SK-N-SH (cell line): ENCODE measurements at regions of chr20 and their contacts with region 1.

Region 1: GRCh38 chr20:38057351-38057972 is 23.9 kb downstream of the RPRD1B start:
- DNase-seq: peak; percentile 80
- H3K4me3 ChIP-seq: no peak overlapping the region; a peak in 1 of 4 replicates
- H3K27ac ChIP-seq: peak overlapping the region in 1 of 2 experiments; percentile 22; a peak in 2 of 4 replicates
- H3K4me1 ChIP-seq: no peaks in the 10 kb centered on the region; a peak in 1 of 4 replicates
- H3K27me3 ChIP-seq: no peaks in the 10 kb centered on the region
- CTCF ChIP-seq: peak; percentile 95
- EP300 ChIP-seq: no peak
- RAD21 ChIP-seq: peak; percentile 94

Region 2: GRCh38 chr20:37864298-37864697 is 193.2 kb before region 1 on chr20:
- CTCF ChIA-PET with region 1: no interaction called
- POLR2A ChIA-PET with region 1: no interaction called
- DNase-seq: no peak
- H3K4me3 ChIP-seq: no peak overlapping the region
- H3K27ac ChIP-seq: no peak overlapping the region
- H3K4me1 ChIP-seq: peaks cover 0 to 11% of the 10 kb centered on the region in 2 experiments; a peak in 2 of 4 replicates
- H3K27me3 ChIP-seq: no peaks in the 10 kb centered on the region
- CTCF ChIP-seq: no peak
- EP300 ChIP-seq: no peak
- RAD21 ChIP-seq: no peak

Region 3: GRCh38 chr20:37901654-37902503 is 155.6 kb before region 1 on chr20:
- CTCF ChIA-PET with region 1: interaction called, 10 read pairs
- POLR2A ChIA-PET with region 1: no interaction called
- DNase-seq: peak; percentile 86
- H3K4me3 ChIP-seq: peak overlapping the region; percentile 57 to 60
- H3K27ac ChIP-seq: no peak overlapping the region
- H3K4me1 ChIP-seq: peaks cover 12 to 25% of the 10 kb centered on the region in 2 experiments; a peak in 2 of 4 replicates
- H3K27me3 ChIP-seq: no peaks in the 10 kb centered on the region
- CTCF ChIP-seq: peak; percentile 63
- EP300 ChIP-seq: no peak
- RAD21 ChIP-seq: peak; percentile 83

Region 4: DNA sequence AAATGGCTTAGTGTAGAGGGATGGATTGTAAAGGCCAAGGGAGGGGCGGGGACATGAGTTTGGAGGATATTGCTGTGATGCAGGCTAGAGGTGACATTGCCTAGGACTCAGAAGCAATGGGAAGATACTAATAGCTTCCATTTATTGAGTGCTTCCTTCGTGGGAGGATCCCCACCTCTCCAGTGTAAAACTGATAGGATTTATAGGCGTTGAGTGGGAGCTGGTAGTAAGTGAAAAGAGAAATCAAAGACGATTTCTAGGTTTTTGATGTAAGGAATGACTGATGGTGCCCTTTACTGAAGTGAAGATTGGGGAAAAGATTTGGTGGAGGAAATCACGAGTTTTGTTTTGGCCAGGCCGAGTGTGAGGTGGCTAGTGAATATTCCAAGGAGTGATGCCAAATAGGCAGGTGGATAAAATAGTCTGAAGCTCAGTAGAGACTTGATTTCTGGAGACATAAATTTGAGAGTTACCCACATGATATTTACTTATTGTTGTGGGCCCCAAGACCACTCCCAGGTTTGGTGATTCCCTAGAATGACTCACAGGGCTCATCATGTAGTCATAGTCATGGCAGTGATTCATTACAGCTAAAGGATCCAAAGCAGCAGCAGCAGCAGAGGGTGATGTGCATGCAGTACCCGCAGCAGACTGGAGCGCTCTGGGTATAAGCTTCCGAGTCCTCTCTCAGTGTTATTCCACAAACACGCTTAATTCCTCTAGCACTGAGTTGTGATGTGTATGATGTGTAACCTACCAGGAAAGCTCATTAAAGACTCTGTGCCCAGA is 13.8 kb before region 1 on chr20:
- CTCF ChIA-PET with region 1: interaction called, 23 read pairs
- POLR2A ChIA-PET with region 1: no interaction called
- DNase-seq: no peak
- H3K4me3 ChIP-seq: no peak overlapping the region
- H3K27ac ChIP-seq: peak overlapping the region in 1 of 2 experiments; percentile 69; a peak in 2 of 4 replicates
- H3K4me1 ChIP-seq: peaks cover 0 to 10% of the 10 kb centered on the region in 2 experiments; a peak in 3 of 4 replicates
- H3K27me3 ChIP-seq: no peaks in the 10 kb centered on the region
- CTCF ChIP-seq: peak; percentile 28; the same call in 1 of the 2 replicates
- EP300 ChIP-seq: no peak
- RAD21 ChIP-seq: no peak

Region 5: DNA sequence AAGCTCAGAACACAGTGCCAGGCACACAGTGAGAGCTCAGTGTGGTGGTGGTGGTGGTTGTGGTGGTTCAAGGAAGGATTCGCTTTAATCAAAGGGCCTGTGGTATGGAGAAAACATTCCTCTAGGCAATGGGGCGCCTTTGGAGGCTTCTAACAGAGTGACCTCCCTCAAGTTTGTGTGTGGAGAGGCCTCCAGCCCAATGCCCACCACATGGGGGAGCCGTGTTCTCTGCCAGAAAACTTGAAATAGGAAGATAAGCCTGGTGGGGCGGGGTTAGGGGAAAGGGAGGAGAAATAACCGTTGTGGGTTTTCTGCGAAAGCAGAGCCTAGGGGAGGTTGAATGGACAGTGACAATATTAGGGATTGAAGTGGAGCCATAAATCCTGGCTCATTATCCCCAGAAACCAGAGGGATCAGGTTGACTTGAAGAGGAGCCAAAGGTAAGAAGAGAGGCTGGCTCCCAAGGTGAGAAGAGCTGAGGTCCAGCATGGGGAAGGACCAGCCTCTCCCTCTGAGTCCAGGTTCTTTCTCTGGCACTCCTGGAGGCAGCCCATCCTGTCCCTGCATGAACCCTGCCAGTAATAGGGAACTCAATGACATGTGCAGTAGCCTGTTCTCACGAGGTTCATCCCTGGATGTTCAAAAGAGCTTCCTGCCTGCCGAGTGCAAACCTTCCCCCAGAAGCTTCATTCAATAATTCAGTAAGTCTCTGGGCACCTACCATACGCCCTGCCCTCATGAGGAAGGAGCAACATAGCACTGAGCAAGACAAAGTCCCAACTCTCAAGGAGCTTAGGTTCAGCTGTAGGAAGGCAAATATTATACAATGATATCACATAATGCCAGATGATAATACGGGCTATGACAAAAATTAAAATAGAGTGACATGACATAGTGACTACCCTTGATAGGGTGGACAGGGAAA is 56.2 kb after region 1 on chr20:
- CTCF ChIA-PET with region 1: interaction called, 11 read pairs
- POLR2A ChIA-PET with region 1: no interaction called
- DNase-seq: no peak
- H3K4me3 ChIP-seq: no peak overlapping the region
- H3K27ac ChIP-seq: peak overlapping the region; percentile 58 to 65
- H3K4me1 ChIP-seq: peaks cover 38 to 42% of the 10 kb centered on the region in 2 experiments
- H3K27me3 ChIP-seq: no peaks in the 10 kb centered on the region
- CTCF ChIP-seq: peak; percentile 57
- EP300 ChIP-seq: no peak
- RAD21 ChIP-seq: peak; percentile 66

Region 6: GRCh38 chr20:38152621-38153231 is 95.3 kb after region 1 on chr20:
- CTCF ChIA-PET with region 1: interaction called, 13 read pairs
- POLR2A ChIA-PET with region 1: no interaction called
- DNase-seq: peak; percentile 91
- H3K4me3 ChIP-seq: no peak overlapping the region
- H3K27ac ChIP-seq: peak overlapping the region; percentile 86 to 98
- H3K4me1 ChIP-seq: peaks cover 30 to 33% of the 10 kb centered on the region in 2 experiments
- H3K27me3 ChIP-seq: no peaks in the 10 kb centered on the region
- CTCF ChIP-seq: no peak
- EP300 ChIP-seq: peak; percentile 40 to 47; a peak in 2 of 4 replicates
- RAD21 ChIP-seq: no peak

Region 7: DNA sequence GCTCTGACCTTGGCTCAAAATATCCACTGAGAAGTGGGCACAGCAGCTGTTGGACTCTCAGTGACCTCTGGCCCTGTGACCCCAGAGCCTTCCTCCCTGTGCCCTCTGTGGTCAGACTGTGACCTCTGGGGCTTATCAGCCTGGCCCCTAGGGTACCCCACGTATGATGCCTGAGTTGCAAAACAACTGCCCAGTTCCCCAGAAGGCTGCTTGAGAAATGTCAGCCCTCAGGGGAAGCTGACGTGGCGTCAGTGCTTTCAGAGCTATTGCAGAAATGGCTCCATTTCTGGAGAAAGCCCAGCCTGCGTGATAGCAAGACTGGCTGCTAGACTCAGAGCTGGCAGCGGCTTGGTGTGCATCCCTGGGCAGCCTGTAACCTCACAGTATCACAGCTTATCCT is 139.1 kb after region 1 on chr20:
- CTCF ChIA-PET with region 1: interaction called, 12 read pairs
- POLR2A ChIA-PET with region 1: no interaction called
- DNase-seq: no peak
- H3K4me3 ChIP-seq: no peak overlapping the region
- H3K27ac ChIP-seq: no peak overlapping the region
- H3K4me1 ChIP-seq: peaks cover 0 to 6% of the 10 kb centered on the region in 2 experiments; a peak in 1 of 4 replicates
- H3K27me3 ChIP-seq: no peaks in the 10 kb centered on the region
- CTCF ChIP-seq: no peak
- EP300 ChIP-seq: no peak
- RAD21 ChIP-seq: no peak

Region 8: GRCh38 chr20:38321959-38322598 is 264.6 kb after region 1 on chr20:
- CTCF ChIA-PET with region 1: interaction called, 10 read pairs
- POLR2A ChIA-PET with region 1: no interaction called
- DNase-seq: peak; percentile 73
- H3K4me3 ChIP-seq: no peak overlapping the region; a peak in 1 of 4 replicates
- H3K27ac ChIP-seq: no peak overlapping the region
- H3K4me1 ChIP-seq: no peaks in the 10 kb centered on the region
- H3K27me3 ChIP-seq: no peaks in the 10 kb centered on the region
- CTCF ChIP-seq: peak; percentile 84
- EP300 ChIP-seq: no peak
- RAD21 ChIP-seq: peak; percentile 87

Region 9: GRCh38 chr20:38418509-38419204 is 361.2 kb after region 1 on chr20:
- CTCF ChIA-PET with region 1: no interaction called
- POLR2A ChIA-PET with region 1: no interaction called
- DNase-seq: no peak
- H3K4me3 ChIP-seq: no peak overlapping the region
- H3K27ac ChIP-seq: peak overlapping the region in 1 of 2 experiments; percentile 12; a peak in 2 of 4 replicates
- H3K4me1 ChIP-seq: peaks cover 0 to 6% of the 10 kb centered on the region in 2 experiments; a peak in 1 of 4 replicates
- H3K27me3 ChIP-seq: no peaks in the 10 kb centered on the region
- CTCF ChIP-seq: no peak
- EP300 ChIP-seq: no peak
- RAD21 ChIP-seq: no peak

Region 10: GRCh38 chr20:38947931-38948362 is 890.5 kb after region 1 on chr20:
- CTCF ChIA-PET with region 1: no interaction called
- POLR2A ChIA-PET with region 1: no interaction called
- DNase-seq: no peak
- H3K4me3 ChIP-seq: no peak overlapping the region
- H3K27ac ChIP-seq: no peak overlapping the region
- H3K4me1 ChIP-seq: no peaks in the 10 kb centered on the region
- H3K27me3 ChIP-seq: no peaks in the 10 kb centered on the region
- CTCF ChIP-seq: no peak
- EP300 ChIP-seq: no peak
- RAD21 ChIP-seq: no peak